ENCODE measurements at regions of chr1 and their contacts with region 1.

Region 1: DNA sequence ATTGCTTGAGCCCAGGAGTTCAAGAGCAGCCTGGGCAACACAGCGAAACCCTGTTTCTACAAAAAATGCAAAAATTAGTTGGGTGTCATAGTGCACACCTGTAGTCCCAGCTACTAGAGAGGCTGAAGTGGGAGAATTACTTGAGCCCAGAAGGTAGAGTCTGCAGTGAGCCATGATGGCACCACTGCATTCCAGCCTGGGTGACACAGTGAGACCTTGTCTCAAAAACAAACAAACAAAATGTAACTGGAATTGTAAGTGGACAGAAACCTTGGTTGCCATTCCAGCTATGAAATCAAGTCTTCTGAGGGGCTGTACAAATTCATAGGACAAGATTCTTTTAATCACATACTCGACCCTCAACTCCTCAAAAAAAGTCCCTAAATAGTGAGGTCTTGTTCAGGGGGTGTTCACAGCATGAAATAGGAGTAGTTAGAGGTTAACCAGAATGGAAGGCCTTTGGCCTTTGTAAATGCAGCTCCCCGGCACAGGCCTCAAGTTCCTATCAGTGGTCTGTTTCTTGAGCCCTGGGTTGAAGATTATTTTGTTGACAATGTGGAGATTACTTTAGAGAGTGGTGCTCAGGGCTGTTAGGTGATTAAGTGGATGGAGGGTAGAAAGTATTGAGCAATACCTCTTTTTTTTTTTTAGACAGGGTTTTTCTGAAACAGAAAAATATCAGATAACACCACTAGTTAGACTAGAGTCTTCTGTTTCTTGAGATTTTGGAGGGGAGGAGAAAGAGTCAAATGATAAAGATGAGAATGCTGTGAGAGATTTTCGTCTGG is 138.7 kb upstream of the ZNF648 start:
- DNase-seq: peak; percentile 75 to 82
- H3K4me3 ChIP-seq: no peak overlapping the region
- H3K4me3 Mint-ChIP-seq: peak overlapping the region; percentile 21
- H3K27ac Mint-ChIP-seq: peak overlapping the region; percentile 13
- H3K4me1 ChIP-seq: peaks cover 44% of the 10 kb centered on the region
- H3K4me1 Mint-ChIP-seq: peaks cover 26% of the 10 kb centered on the region
- H3K27me3 ChIP-seq: no peaks in the 10 kb centered on the region
- H3K27me3 Mint-ChIP-seq: no peaks in the 10 kb centered on the region
- CTCF ChIP-seq: no peak

Region 2: DNA sequence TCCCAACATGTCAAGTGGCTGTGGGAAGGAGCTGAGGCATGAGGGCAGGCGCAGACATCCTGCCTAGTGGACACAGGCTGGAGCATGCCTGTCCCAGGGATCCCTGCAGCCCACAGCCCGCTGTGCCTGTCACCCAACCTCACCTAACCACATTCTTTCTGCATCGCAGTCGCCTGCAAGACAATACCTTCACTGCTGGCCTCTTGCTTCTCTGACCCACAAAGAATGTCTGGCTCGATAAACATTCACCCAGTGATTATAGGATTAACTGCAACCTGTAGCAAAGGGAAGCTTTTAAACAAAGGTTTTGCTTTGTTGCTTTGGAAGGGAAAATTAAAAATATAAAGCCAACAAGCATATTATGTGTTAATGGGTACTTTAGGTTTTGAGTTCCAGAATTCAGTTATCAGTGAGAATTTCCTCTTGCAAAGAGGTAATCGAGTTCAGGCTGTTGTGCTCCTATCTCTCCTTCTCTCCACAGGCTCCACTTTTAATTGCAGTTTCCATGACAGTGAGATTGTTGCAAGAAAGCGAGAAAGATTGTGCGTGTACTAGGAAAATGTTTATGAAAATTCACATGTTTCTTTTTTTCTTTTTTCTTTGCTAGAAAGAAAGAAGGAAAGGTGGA is 98.7 kb before region 1 on chr1:
- CTCF ChIA-PET with region 1: no interaction called
- POLR2A ChIA-PET with region 1: no interaction called
- intact Hi-C with region 1: loop called (anchors 2 kb)
- DNase-seq: peak; percentile 93 to 97
- H3K4me3 ChIP-seq: no peak overlapping the region
- H3K4me3 Mint-ChIP-seq: peak overlapping the region; percentile 71
- H3K27ac Mint-ChIP-seq: peak overlapping the region; percentile 98
- H3K4me1 ChIP-seq: peaks cover 38% of the 10 kb centered on the region
- H3K4me1 Mint-ChIP-seq: peaks cover 47% of the 10 kb centered on the region
- H3K27me3 ChIP-seq: no peaks in the 10 kb centered on the region
- H3K27me3 Mint-ChIP-seq: no peaks in the 10 kb centered on the region
- CTCF ChIP-seq: no peak

Region 3: DNA sequence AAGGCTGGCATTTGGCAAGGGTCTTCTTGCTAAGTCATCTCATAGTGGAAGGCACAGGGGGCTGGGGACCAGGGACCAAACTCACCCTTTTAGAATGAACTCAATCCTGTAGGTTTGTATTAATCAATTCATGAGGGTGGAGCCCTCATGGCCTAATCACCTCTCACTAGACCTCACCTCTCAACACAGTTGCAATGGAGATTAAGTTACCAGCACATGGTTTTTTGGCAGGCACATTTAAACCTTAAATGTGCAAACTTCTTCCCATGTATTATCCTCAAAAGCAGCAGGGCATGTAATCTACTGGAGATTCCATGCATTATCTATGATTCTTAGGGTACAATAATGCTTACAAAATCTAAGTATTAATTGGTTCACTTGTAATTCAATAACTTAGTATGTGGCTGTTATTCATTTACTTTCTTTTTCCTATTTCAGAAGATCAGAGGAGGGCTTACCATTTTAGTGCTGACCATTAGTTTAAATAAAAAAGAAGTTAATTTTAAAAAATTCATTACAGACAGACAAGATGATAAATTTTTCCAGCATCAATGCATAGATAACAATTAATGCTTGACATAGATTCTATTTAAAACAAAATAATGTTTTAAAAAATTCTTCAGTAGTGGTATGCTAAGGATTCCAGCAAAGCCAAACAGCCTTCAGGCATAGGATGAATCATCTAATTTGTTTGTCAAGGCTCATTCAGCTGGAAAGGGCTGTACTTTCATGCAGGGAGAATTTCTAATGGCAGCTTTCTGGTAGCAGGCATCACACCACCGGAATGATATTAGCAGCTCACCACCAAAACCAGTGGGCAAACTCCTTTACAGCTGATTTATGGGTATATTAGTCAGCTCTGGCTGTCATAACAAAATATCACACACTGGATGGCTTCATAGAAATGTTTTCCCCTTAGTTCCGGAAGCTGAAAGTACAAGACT is 14.1 kb before region 1 on chr1:
- CTCF ChIA-PET with region 1: no interaction called
- POLR2A ChIA-PET with region 1: no interaction called
- intact Hi-C with region 1: loop called (anchors 2 kb)
- DNase-seq: peak in 1 of 2 experiments; percentile 23
- H3K4me3 ChIP-seq: no peak overlapping the region
- H3K4me3 Mint-ChIP-seq: no peak overlapping the region
- H3K27ac Mint-ChIP-seq: peak overlapping the region; percentile 46
- H3K4me1 ChIP-seq: peaks cover 16% of the 10 kb centered on the region
- H3K4me1 Mint-ChIP-seq: peaks cover 4% of the 10 kb centered on the region
- H3K27me3 ChIP-seq: no peaks in the 10 kb centered on the region
- H3K27me3 Mint-ChIP-seq: no peaks in the 10 kb centered on the region
- CTCF ChIP-seq: no peak

Region 4: DNA sequence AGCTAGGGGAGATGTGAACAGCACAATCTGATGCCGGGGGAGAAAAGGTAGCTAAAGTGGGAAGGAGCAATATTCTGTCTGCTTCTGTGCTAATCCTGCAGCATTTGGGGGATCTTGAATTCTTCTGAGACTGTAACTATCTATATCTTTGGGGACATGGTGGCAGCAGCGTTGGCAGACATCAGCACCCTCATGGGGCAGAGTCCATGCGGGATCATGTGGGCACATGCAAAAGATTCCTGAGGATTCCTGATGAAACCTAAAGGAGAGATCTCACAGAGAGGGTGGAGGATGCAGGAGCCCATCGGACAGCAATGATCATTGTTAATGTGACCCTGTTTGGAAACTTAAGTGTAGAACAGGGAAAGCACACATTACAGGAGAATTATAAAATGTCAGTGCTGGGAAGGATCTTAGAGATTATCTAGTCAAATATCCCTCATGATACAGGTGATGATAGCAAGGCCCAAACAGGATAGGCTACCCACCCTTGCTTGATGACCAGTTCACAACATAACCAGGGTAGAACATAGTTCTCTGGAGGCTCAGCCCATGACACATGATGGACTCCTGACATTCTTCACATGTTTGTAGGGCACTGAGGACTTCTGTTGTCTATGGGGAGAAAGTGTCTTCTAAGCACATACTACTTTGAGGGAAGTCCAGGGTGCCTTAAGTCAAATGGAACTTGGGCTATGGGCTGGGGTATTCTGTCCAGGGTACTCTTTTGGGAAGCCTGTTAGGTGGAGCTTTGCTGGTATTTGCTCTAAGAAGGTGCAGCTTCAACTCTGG is 42.2 kb after region 1 on chr1:
- CTCF ChIA-PET with region 1: no interaction called
- POLR2A ChIA-PET with region 1: no interaction called
- intact Hi-C with region 1: no loop called
- DNase-seq: no peak
- H3K4me3 ChIP-seq: no peak overlapping the region
- H3K4me3 Mint-ChIP-seq: no peak overlapping the region
- H3K27ac Mint-ChIP-seq: no peak overlapping the region
- H3K4me1 ChIP-seq: peaks cover 10% of the 10 kb centered on the region
- H3K4me1 Mint-ChIP-seq: peaks cover 18% of the 10 kb centered on the region
- H3K27me3 ChIP-seq: no peaks in the 10 kb centered on the region
- H3K27me3 Mint-ChIP-seq: no peaks in the 10 kb centered on the region
- CTCF ChIP-seq: no peak

Region 5: DNA sequence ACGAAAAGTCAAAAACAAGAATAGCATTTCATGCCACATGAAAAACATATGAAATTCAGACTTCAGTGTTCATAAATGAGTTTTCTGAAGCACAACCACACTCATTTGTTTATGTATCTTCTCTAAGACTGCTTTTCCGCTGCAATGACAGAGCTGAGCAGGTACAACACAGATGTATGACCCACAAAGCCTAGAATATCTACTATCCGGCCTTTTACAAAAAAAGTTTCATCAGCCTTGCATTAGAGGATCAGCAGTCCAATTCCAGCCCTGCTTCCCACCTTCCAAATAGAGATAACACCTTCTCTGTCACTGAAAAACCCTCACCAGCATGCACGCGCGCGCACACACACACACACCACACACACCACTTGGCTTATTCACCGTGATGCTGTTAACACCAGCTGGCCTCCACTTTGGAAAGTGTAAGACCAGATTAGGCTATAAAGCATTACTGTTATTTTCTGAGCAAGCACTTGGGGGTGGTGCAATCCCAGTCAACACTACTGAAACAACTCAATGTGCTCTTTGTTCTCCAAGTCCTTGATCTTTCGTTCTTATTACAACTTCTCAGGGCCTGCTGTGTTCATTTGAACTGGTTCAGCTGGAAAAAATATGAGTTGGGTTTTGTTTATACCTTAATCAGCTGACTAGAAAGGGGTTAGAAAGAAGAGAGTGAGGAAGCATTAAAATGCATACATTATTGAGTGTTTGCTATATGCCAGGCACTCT is 101.4 kb after region 1 on chr1:
- CTCF ChIA-PET with region 1: no interaction called
- POLR2A ChIA-PET with region 1: interaction called, 3 read pairs
- intact Hi-C with region 1: loop called (anchors 5 kb)
- DNase-seq: peak; percentile 50 to 61
- H3K4me3 ChIP-seq: no peak overlapping the region
- H3K4me3 Mint-ChIP-seq: no peak overlapping the region
- H3K27ac Mint-ChIP-seq: peak overlapping the region; percentile 29
- H3K4me1 ChIP-seq: peaks cover 30% of the 10 kb centered on the region
- H3K4me1 Mint-ChIP-seq: peaks cover 31% of the 10 kb centered on the region
- H3K27me3 ChIP-seq: no peaks in the 10 kb centered on the region
- H3K27me3 Mint-ChIP-seq: no peaks in the 10 kb centered on the region
- CTCF ChIP-seq: no peak

Region 6: GRCh38 chr1:182397771-182398393 is 197.7 kb after region 1 on chr1:
- CTCF ChIA-PET with region 1: no interaction called
- POLR2A ChIA-PET with region 1: no interaction called
- intact Hi-C with region 1: loop called (anchors 2 kb)
- DNase-seq: peak in 1 of 2 experiments; percentile 34
- H3K4me3 ChIP-seq: no peak overlapping the region
- H3K4me3 Mint-ChIP-seq: no peak overlapping the region
- H3K27ac Mint-ChIP-seq: peak overlapping the region; percentile 62
- H3K4me1 ChIP-seq: peaks cover 23% of the 10 kb centered on the region
- H3K4me1 Mint-ChIP-seq: peaks cover 35% of the 10 kb centered on the region
- H3K27me3 ChIP-seq: no peaks in the 10 kb centered on the region
- H3K27me3 Mint-ChIP-seq: no peaks in the 10 kb centered on the region
- CTCF ChIP-seq: no peak

Measured in Caco-2 (cell line).